Gastrocnemius medialis (tissue), 4 donors: ENCODE measurements at regions of chr2 and their contacts with region 1.

Region 1: GRCh38 chr2:45169339-45170190 is 160.3 kb upstream of the SIX2 start:
- DNase-seq: no peak
- ATAC-seq: peak; percentile 31 to 40
- H3K4me3 ChIP-seq: peak overlapping the region; percentile 56 to 77 (median 62)
- H3K27ac ChIP-seq: peak overlapping the region; percentile 68 to 88 (median 74)
- H3K4me1 ChIP-seq: peaks cover 6 to 10% of the 10 kb centered on the region in 2 donors
- H3K27me3 ChIP-seq: peaks cover 30 to 51% (median 35%) of the 10 kb centered on the region in 3 donors
- CTCF ChIP-seq: peak in 1 of 5 experiments; percentile 8
- POLR2A ChIP-seq: no peak

Region 2: DNA sequence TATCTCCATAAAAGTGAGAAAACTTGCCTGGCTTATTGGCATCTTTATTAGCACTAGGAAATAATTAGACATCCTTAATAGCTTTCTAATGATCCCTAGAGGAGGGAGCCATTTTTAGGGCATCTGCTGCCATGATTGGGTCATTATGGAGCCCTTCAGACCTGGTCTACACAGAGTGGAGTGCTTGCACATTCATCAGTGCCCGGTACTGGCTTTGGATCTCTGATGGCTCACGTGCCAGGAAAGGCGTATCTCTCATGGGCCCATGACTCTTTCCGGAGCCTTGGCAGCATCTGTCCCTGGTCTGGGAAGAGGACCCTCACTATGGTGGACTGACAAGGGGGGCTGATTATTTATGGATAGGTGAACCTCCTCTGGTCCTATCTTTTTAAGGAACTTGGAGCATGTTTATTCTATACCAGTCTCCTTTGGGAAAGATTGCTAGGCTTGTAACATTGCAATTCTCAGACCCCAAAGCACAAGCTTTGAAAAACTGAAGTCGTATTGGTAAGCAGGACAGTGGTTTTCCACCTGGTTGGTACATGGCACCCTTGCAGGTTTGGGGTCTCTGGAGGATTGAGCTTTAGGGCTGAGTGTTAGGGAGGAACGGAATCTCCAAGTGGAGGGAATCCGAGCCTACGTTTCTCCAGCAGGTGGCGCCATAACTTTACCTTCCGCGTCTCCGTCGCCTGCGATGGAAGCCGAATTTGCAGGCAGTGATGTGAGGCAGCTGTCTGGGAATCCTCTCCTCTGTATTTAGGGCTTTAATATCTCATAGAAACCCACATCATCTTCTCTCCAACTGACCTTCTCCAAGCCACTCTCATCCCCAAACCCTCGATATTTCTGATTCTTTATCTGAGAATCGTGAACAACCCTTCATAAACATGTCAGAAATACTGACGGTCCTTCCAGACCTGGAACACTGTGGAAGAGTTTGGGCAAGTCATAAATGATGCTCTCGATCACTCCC is 188.1 kb before region 1 on chr2:
- in situ Hi-C with region 1: loop called in 2 of 4 experiments (anchors 25 kb)
- intact Hi-C with region 1: no loop called
- DNase-seq: peak; percentile 41 to 56
- ATAC-seq: peak; percentile 86 to 93
- H3K4me3 ChIP-seq: no peak overlapping the region
- H3K27ac ChIP-seq: no peak overlapping the region
- H3K4me1 ChIP-seq: no peaks in the 10 kb centered on the region
- H3K27me3 ChIP-seq: peaks cover 0 to 2% (median 0%) of the 10 kb centered on the region in 3 donors
- CTCF ChIP-seq: peak; percentile 71 to 92 (median 89)
- POLR2A ChIP-seq: no peak

Region 3: GRCh38 chr2:45009303-45009927 is 160.2 kb before region 1 on chr2 and contains the start of gene SIX2:
- in situ Hi-C with region 1: no loop called
- intact Hi-C with region 1: loop called (anchors 2 kb)
- DNase-seq: peak; percentile 95 to 97
- ATAC-seq: peak; percentile 80 to 84
- H3K4me3 ChIP-seq: peak within 1 kb of the TSS; percentile 64 to 85 (median 72)
- H3K27ac ChIP-seq: peak within 1 kb of the TSS; percentile 90 to 97 (median 90)
- H3K4me1 ChIP-seq: peaks cover 20 to 49% of the 10 kb centered on the region in 2 donors
- H3K27me3 ChIP-seq: peaks cover 0 to 25% (median 0%) of the 10 kb centered on the region in 3 donors
- CTCF ChIP-seq: peak in 1 of 5 experiments; percentile 10
- POLR2A ChIP-seq: peak; percentile 87 to 96
- total RNA-seq, gene SIX2: 28.9 to 65.5 (median 50.5) TPM

Region 4: DNA sequence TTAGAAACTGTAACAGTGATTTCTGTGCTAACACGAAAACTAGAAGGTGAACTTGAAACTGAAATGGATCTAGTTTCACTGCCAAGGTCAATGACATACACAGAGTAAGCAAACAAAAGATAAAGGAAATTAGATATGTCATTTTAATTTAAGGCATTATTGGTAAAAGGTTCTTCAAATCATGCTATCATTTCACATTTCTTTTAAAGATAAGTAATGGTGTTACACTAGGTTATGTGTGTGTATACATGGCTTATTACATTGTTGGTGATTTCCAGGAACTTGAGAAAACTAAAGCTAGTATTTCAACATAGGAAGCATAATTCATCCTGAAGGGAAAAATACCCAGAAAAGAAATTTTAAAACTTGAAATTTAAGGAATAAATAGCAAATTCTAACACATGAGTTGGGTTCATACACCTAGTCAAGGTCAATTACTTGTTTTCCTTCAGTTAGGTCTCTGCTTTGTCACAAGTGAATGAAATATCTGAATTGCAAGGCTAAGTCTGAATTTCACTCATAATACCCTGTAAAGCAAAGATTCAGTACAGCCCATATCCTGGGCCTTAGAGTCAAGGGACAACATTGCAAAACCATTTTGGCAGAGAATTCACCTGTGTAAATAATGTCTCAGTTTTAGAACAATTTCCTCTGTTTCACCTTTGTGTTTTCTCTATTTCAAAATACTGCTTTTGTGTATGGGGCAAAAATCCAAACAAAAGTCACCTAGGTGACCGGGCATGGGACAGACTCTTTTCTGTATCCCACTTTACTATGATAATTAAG is 299.9 kb after region 1 on chr2:
- in situ Hi-C with region 1: loop called in 1 of 4 experiments (anchors 10 kb)
- intact Hi-C with region 1: no loop called
- DNase-seq: no peak
- ATAC-seq: peak; percentile 57 to 67
- H3K4me3 ChIP-seq: no peak overlapping the region
- H3K27ac ChIP-seq: peak overlapping the region in 1 of 4 donors; percentile 41
- H3K4me1 ChIP-seq: peaks cover 17 to 22% of the 10 kb centered on the region in 2 donors
- H3K27me3 ChIP-seq: no peaks in the 10 kb centered on the region
- CTCF ChIP-seq: no peak
- POLR2A ChIP-seq: no peak

Region 5: GRCh38 chr2:45477546-45477945 is 308.0 kb after region 1 on chr2:
- in situ Hi-C with region 1: loop called in 2 of 4 experiments (anchors 10 to 25 kb)
- intact Hi-C with region 1: loop called (anchors 5 kb)
- DNase-seq: peak; percentile 23 to 53
- ATAC-seq: peak; percentile 95 to 99
- H3K4me3 ChIP-seq: no peak overlapping the region
- H3K27ac ChIP-seq: no peak overlapping the region
- H3K4me1 ChIP-seq: peaks cover 0 to 7% of the 10 kb centered on the region in 2 donors
- H3K27me3 ChIP-seq: no peaks in the 10 kb centered on the region
- CTCF ChIP-seq: no peak
- POLR2A ChIP-seq: no peak

Region 6: GRCh38 chr2:45494269-45494977 is 324.9 kb after region 1 on chr2:
- in situ Hi-C with region 1: loop called in 1 of 4 experiments (anchors 25 kb)
- intact Hi-C with region 1: no loop called
- DNase-seq: no peak
- ATAC-seq: peak in 1 of 2 donors; percentile 60
- H3K4me3 ChIP-seq: no peak overlapping the region
- H3K27ac ChIP-seq: no peak overlapping the region
- H3K4me1 ChIP-seq: no peaks in the 10 kb centered on the region
- H3K27me3 ChIP-seq: no peaks in the 10 kb centered on the region
- CTCF ChIP-seq: peak; percentile 72 to 87 (median 81)
- POLR2A ChIP-seq: no peak